A549 (cell line): ENCODE measurements at regions of chr1 and their contacts with region 1.

Region 1: GRCh38 chr1:17606826-17607440 is 67.4 kb downstream of the ARHGEF10L start:
- DNase-seq: peak; percentile 43 to 61
- ATAC-seq: peak; percentile 77 to 87; a peak in 5 of 6 replicates
- H3K4me3 ChIP-seq: no peak overlapping the region
- H3K27ac ChIP-seq: no peak overlapping the region
- H3K4me1 ChIP-seq: no peaks in the 10 kb centered on the region
- CTCF ChIP-seq: peak; percentile 79
- EP300 ChIP-seq: no peak
- POLR2A ChIP-seq: no peak
- RAD21 ChIP-seq: peak; percentile 87 to 90

Region 2: GRCh38 chr1:17494114-17494729 is 112.7 kb before region 1 on chr1:
- CTCF ChIA-PET with region 1: interaction called, 63 read pairs
- POLR2A ChIA-PET with region 1: no interaction called
- DNase-seq: peak; percentile 78 to 81
- ATAC-seq: peak; percentile 98 to 99
- H3K4me3 ChIP-seq: no peak overlapping the region
- H3K27ac ChIP-seq: no peak overlapping the region
- H3K4me1 ChIP-seq: peaks cover 14% of the 10 kb centered on the region; the same call in 2 of the 3 replicates
- CTCF ChIP-seq: peak; percentile 90
- EP300 ChIP-seq: no peak
- POLR2A ChIP-seq: no peak
- RAD21 ChIP-seq: peak; percentile 90 to 92

Region 3: GRCh38 chr1:17520071-17520813 is 86.7 kb before region 1 on chr1:
- CTCF ChIA-PET with region 1: interaction called, 10 read pairs
- POLR2A ChIA-PET with region 1: no interaction called
- DNase-seq: no peak
- ATAC-seq: no peak
- H3K4me3 ChIP-seq: no peak overlapping the region
- H3K27ac ChIP-seq: no peak overlapping the region
- H3K4me1 ChIP-seq: peaks cover 13% of the 10 kb centered on the region; the same call in 2 of the 3 replicates
- CTCF ChIP-seq: no peak
- EP300 ChIP-seq: no peak
- POLR2A ChIP-seq: no peak
- RAD21 ChIP-seq: no peak

Region 4: DNA sequence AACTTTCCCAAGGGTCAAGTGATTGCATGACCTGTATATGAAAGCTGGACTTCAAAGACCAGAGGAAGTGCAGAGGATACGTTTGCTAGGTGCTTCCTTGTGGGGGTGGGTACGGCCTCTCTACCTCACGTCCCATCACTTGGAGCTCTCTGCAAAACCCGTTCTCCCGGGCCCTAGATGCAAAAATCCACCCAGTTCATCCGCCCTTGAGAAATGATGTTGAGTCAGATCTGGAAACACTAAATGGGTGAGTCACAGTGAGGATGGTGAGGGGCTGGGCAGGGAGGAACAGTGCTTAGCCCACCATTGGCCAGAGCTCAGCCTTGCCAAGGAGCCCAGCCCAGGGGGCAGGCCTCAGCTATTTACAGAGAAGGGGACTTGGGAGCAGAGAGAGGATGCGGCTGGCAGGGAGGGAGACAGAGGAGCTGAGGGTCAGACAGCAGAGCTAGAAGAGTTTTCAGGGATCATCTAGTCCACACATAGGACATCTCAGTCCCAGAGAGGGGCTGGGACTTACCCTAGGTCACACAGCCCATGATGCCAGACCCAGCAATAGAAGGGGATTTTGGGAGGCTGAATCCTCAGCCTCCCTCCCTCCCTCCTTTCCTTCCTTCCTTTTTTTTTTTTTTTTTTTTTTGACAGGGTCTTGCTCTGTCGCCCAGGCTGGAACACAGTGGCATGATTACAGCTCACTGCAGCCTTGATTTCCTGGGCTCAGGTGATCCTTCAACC is 52.8 kb before region 1 on chr1:
- CTCF ChIA-PET with region 1: interaction called, 13 read pairs
- POLR2A ChIA-PET with region 1: interaction called, 3 read pairs
- DNase-seq: peak in 1 of 2 experiments; percentile 45
- ATAC-seq: peak; percentile 49 to 81; a peak in 5 of 6 replicates
- H3K4me3 ChIP-seq: no peak overlapping the region
- H3K27ac ChIP-seq: peak overlapping the region; percentile 14 to 73; a peak in 4 of 6 replicates
- H3K4me1 ChIP-seq: peaks cover 41% of the 10 kb centered on the region
- CTCF ChIP-seq: no peak
- EP300 ChIP-seq: no peak
- POLR2A ChIP-seq: no peak
- RAD21 ChIP-seq: no peak

Region 5: DNA sequence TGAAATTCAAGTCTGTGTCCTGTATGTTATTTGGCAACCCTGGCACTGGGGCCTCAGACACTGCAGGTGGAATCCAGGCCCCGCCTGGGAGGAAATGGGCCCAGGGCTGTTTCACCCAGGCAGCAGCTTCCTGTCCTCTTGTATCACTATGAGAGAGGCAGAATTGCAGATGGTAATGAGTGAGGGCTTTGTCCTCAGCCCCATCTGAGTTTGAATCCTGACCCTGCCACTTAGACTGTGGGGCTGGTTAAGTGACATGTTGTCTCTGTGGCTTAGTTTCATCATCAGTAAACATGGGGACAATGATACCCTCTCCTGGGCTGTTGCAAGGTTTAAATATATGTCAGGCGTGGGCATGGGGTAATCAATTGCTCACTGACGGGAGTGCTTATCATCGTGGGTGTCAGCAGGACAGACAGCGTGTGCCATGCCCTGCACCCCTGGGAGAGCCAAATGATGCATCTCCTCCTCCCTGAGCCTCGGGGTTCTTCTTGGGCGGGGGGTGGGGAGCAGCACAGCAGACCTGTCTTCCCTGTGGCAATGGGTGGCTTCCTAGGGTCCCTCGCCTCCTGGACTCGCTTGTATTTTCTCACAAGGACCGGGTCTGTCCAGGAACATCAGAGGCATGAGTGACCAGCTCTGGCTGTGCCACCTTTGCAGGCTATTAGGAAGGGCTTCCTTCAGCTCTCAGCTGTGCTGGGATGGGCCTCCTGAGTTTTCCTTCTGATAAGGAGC is 25.4 kb before region 1 on chr1:
- CTCF ChIA-PET with region 1: interaction called, 25 read pairs
- POLR2A ChIA-PET with region 1: no interaction called
- DNase-seq: no peak
- ATAC-seq: 0 out of 6 replicates have a peak, but pooled peaks of 1 of the 2 experiments have one; percentile 16
- H3K4me3 ChIP-seq: no peak overlapping the region
- H3K27ac ChIP-seq: peak overlapping the region; percentile 49 to 71; a peak in 4 of 6 replicates
- H3K4me1 ChIP-seq: peaks cover 52% of the 10 kb centered on the region
- CTCF ChIP-seq: no peak
- EP300 ChIP-seq: no peak
- POLR2A ChIP-seq: no peak
- RAD21 ChIP-seq: no peak

Region 6: DNA sequence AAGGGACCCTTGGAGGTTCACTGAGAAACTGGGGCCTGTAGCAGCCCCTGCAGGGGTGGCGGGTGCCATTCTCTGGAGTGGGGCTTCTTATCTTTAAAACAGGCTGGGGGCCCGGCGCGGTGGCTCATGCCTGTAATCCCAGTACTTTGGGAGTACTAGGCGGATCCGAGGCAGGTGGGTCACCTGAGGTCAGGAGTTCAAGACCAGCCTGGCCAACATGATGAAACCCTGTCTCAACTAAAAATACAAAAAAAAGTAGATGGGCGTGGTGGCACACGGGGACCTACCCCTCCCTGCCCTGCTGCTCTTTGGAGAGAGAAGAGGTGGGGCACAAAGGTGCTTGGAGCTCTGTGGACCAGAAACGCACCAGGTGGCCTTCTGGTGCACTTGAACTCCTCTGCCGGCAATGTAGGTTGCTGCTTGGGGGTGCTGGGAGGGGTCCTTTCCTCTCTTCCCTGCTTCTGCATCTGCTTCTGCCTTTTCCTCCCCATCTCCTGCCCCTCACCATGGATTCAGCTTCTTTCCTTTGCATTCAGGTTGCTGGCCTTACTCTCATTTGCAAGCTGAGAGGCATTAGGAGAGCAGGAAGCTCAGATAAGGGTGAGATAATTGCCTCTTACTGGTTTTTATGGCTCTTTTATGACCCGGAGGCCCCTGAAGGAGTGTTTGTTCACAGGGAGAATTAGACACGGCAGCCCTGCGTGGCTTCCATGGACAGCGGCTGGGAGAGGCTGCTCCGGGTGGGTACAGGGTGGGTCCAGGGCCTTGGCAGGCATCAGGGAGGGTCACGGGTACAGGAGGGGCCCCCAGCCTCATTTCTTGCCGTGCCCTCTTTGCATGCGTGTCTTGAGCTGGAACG is 10.1 kb before region 1 on chr1:
- CTCF ChIA-PET with region 1: interaction called, 13 read pairs
- POLR2A ChIA-PET with region 1: no interaction called
- DNase-seq: no peak
- ATAC-seq: no peak
- H3K4me3 ChIP-seq: no peak overlapping the region
- H3K27ac ChIP-seq: no peak overlapping the region
- H3K4me1 ChIP-seq: 0 out of 3 replicates have a peak, but pooled peaks cover 5% of the 10 kb centered on the region
- CTCF ChIP-seq: no peak
- EP300 ChIP-seq: no peak
- POLR2A ChIP-seq: no peak
- RAD21 ChIP-seq: no peak

Region 7: GRCh38 chr1:17648457-17649145 is 41.7 kb after region 1 on chr1:
- CTCF ChIA-PET with region 1: no interaction called
- POLR2A ChIA-PET with region 1: no interaction called
- DNase-seq: no peak
- ATAC-seq: no peak
- H3K4me3 ChIP-seq: no peak overlapping the region
- H3K27ac ChIP-seq: no peak overlapping the region
- H3K4me1 ChIP-seq: no peaks in the 10 kb centered on the region
- CTCF ChIP-seq: no peak
- EP300 ChIP-seq: no peak
- POLR2A ChIP-seq: no peak
- RAD21 ChIP-seq: no peak

Region 8: GRCh38 chr1:17696417-17697301 is 89.7 kb after region 1 on chr1:
- CTCF ChIA-PET with region 1: no interaction called
- POLR2A ChIA-PET with region 1: no interaction called
- DNase-seq: peak; percentile 38 to 59
- ATAC-seq: peak; percentile 91 to 92; a peak in 5 of 6 replicates
- H3K4me3 ChIP-seq: no peak overlapping the region
- H3K27ac ChIP-seq: no peak overlapping the region
- H3K4me1 ChIP-seq: peaks cover 4% of the 10 kb centered on the region; the same call in 1 of the 3 replicates
- CTCF ChIP-seq: peak; percentile 48
- EP300 ChIP-seq: no peak
- POLR2A ChIP-seq: no peak
- RAD21 ChIP-seq: peak; percentile 42 to 44; a peak in 4 of 5 replicates